ENCODE measurements at regions of chr6 and their contacts with region 1.

Region 1: GRCh38 chr6:55886185-55886836 is 10.9 kb upstream of the BMP5 start:
- DNase-seq: no peak
- H3K4me3 ChIP-seq: no peak overlapping the region
- H3K27ac ChIP-seq: no peak overlapping the region
- H3K4me1 ChIP-seq: peaks cover 0 to 11% (median 5%) of the 10 kb centered on the region in 4 donors
- H3K27me3 ChIP-seq: no peaks in the 10 kb centered on the region
- CTCF ChIP-seq: peak in 3 of 4 experiments; percentile 12 to 41 (median 19)
- EP300 ChIP-seq: no peak
- POLR2A ChIP-seq: no peak

Region 2: GRCh38 chr6:55445648-55446204 is 440.6 kb before region 1 on chr6:
- intact Hi-C with region 1: loop called (anchors 5 kb)
- DNase-seq: no peak
- H3K4me3 ChIP-seq: no peak overlapping the region
- H3K27ac ChIP-seq: no peak overlapping the region
- H3K4me1 ChIP-seq: no peaks in the 10 kb centered on the region
- H3K27me3 ChIP-seq: no peaks in the 10 kb centered on the region
- CTCF ChIP-seq: peak; percentile 16 to 56 (median 42)
- EP300 ChIP-seq: no peak
- POLR2A ChIP-seq: no peak

Region 3: GRCh38 chr6:55617272-55617671 is 269.0 kb before region 1 on chr6:
- intact Hi-C with region 1: no loop called
- DNase-seq: no peak
- H3K4me3 ChIP-seq: no peak overlapping the region
- H3K27ac ChIP-seq: no peak overlapping the region
- H3K4me1 ChIP-seq: no peaks in the 10 kb centered on the region
- H3K27me3 ChIP-seq: no peaks in the 10 kb centered on the region
- CTCF ChIP-seq: no peak
- EP300 ChIP-seq: no peak
- POLR2A ChIP-seq: no peak

Region 4: DNA sequence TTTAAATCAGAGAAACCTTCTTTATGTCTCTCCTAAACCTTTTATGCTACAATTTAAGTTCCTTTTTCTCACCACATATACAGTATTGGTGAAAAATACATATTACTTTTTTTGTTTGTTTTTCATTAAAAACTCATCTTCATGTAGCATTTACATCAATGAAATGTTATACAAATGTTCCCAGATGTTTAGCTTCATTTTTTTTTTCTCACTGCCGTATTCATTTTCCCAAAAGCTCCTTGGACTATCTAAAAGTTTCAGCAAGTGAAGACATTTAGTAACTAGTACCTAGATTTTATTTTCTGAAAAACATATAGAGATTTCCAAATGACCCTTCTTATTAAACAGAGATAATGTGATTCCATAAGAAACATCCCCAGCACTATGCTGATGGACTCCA is 139.8 kb before region 1 on chr6:
- intact Hi-C with region 1: no loop called
- DNase-seq: no peak
- H3K4me3 ChIP-seq: no peak overlapping the region
- H3K27ac ChIP-seq: no peak overlapping the region
- H3K4me1 ChIP-seq: no peaks in the 10 kb centered on the region
- H3K27me3 ChIP-seq: no peaks in the 10 kb centered on the region
- CTCF ChIP-seq: no peak
- EP300 ChIP-seq: no peak
- POLR2A ChIP-seq: no peak

Region 5: DNA sequence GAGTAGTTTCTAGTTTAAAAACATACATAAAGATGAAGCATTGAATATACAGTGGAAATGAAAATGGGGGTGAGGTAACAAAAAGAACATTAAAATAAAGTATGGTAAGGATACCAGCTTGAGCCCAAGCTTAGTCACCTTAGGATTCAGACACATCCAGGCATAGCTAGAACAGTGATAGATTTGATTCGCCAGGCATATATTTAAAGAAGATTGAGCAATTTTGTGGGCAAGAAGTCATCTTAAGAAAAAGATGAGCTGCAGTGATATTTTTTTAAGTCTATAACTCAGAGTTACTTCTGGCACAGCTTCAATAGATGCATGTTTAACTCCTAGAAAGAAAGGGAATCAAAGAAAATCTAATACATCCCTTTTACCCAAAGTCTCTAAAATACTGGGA is 108.8 kb before region 1 on chr6:
- intact Hi-C with region 1: no loop called
- DNase-seq: no peak
- H3K4me3 ChIP-seq: no peak overlapping the region
- H3K27ac ChIP-seq: no peak overlapping the region
- H3K4me1 ChIP-seq: peaks cover 0 to 3% (median 0%) of the 10 kb centered on the region in 4 donors
- H3K27me3 ChIP-seq: no peaks in the 10 kb centered on the region
- CTCF ChIP-seq: no peak
- EP300 ChIP-seq: no peak
- POLR2A ChIP-seq: no peak

Measured in sigmoid colon (tissue), 7 donors.